Activated CD8-positive, alpha-beta T cell treated with anti-CD3 and anti-CD28 coated beads, Interleukin-2, amount 10 ng/mL, durations not matched to agents 7 days and 5 days (primary cell): ENCODE measurements at regions of chr5 and their contacts with region 1.

Region 1: GRCh38 chr5:81301271-81302015 is at the start of gene ZCCHC9:
- DNase-seq: peak; percentile 96
- ATAC-seq: peak; percentile 97
- H3K4me3 Mint-ChIP-seq: peak within 1 kb of the TSS; percentile 89
- H3K27ac Mint-ChIP-seq: peak within 1 kb of the TSS; percentile 96
- H3K4me1 Mint-ChIP-seq: peaks cover 33% of the 10 kb centered on the region
- H3K27me3 Mint-ChIP-seq: no peaks in the 10 kb centered on the region
- total RNA-seq, gene ZCCHC9: 29.9 to 33.2 TPM

Region 2: DNA sequence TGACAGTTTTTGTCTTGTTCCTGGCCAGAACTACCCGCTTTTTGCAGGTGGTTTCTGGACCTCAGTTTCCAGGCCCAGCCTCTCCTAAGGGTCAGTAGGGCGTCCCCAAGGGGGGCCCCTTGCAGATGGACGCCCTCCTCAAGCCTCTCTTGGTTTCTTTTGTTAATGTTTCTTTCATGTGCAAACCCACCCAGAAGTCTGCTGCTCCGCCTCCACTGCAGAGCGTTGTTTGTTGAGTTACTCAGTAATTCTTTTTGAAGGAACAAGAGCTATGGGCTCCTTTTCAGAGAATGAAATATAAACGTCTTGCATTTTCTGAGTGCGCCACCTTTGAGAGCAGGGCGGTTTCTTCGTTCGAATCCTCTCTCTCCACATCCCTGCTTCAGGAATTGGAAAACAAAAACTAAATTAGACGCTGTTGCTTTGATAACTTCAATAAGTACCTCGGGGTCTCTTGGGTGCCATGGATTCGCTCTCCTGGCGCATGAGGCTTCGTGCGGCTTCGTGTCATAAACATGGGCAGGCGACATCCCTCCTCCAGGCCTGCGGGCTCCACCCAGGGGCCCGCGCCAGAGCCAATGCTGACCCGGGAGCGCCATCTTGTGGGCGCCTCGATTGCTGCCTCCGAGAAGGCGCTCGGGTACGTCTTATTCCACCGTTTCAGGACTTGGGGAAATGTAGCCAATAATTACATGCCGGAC is 106.7 kb before region 1 on chr5:
- CTCF ChIA-PET with region 1: interaction called, 22 read pairs
- POLR2A ChIA-PET with region 1: no interaction called
- DNase-seq: peak; percentile 88
- ATAC-seq: peak; percentile 99
- H3K4me3 Mint-ChIP-seq: peak overlapping the region; percentile 36
- H3K27ac Mint-ChIP-seq: peak overlapping the region; percentile 58
- H3K4me1 Mint-ChIP-seq: peaks cover 9% of the 10 kb centered on the region
- H3K27me3 Mint-ChIP-seq: no peaks in the 10 kb centered on the region

Region 3: GRCh38 chr5:81233080-81233634 is 68.3 kb before region 1 on chr5 and contains the start of gene CKMT2:
- CTCF ChIA-PET with region 1: interaction called, 11 read pairs
- POLR2A ChIA-PET with region 1: no interaction called
- DNase-seq: no peak
- ATAC-seq: no peak
- H3K4me3 Mint-ChIP-seq: no peak within 1 kb of the TSS
- H3K27ac Mint-ChIP-seq: no peak within 1 kb of the TSS
- H3K4me1 Mint-ChIP-seq: peaks cover 35% of the 10 kb centered on the region
- H3K27me3 Mint-ChIP-seq: no peaks in the 10 kb centered on the region
- total RNA-seq, gene CKMT2: not detected

Region 4: GRCh38 chr5:81288021-81288433 is 13.4 kb before region 1 on chr5:
- CTCF ChIA-PET with region 1: interaction called, 22 read pairs
- POLR2A ChIA-PET with region 1: interaction called, 4 read pairs
- DNase-seq: no peak
- ATAC-seq: no peak
- H3K4me3 Mint-ChIP-seq: no peak overlapping the region
- H3K27ac Mint-ChIP-seq: no peak overlapping the region
- H3K4me1 Mint-ChIP-seq: peaks cover 30% of the 10 kb centered on the region
- H3K27me3 Mint-ChIP-seq: no peaks in the 10 kb centered on the region

Region 5: DNA sequence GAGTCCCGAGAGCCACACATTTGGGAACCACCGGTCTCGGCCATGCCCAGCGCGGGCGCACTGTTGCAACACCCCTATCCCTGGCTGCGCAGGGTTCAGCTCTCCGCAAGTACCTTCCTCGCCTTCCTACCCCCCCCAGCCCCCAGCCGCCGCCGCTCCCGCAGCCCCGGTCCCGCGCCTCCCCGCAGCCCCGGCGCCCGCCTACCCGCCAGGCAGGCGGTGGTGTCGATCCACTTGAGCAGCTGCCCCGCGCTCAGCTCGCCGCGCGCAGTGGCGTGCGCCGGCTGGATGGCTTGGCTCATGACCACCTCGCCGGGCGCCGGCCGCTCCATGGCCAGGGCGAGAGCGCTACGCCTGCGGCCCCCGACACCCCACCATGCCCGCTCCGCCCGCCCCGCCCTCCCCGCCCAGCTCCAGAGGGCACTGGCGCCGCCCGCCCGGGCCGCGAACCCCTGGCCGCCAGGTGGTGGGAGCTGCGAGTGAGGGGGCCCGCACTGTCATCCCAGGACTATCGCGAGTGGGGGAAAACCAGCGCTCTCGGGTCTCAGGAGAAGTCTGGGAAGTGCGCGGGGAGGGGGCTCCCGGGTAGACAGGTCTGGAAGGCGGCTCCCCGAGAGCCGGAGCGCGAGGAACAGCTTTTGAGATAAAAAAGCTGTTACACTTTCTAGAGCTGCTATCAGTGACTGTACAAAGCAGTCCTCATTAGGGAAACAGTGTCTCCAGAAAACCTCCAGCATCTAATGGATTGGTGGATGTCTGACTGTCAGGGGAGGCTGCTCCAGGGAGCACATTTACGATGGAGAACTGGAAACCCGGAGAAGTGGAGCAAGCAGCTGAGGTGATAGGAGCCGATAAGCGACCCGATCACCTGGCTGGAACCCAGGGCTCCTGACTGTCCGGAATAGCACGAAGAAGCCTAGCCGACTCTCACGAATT is 92.6 kb after region 1 on chr5 and contains the start of gene ACOT12:
- CTCF ChIA-PET with region 1: no interaction called
- POLR2A ChIA-PET with region 1: no interaction called
- DNase-seq: no peak
- ATAC-seq: peak; percentile 58
- H3K4me3 Mint-ChIP-seq: peak within 1 kb of the TSS; percentile 45
- H3K27ac Mint-ChIP-seq: no peak within 1 kb of the TSS
- H3K4me1 Mint-ChIP-seq: peaks cover 3% of the 10 kb centered on the region
- H3K27me3 Mint-ChIP-seq: peaks cover 54% of the 10 kb centered on the region
- total RNA-seq, gene ACOT12: not detected

Region 6: GRCh38 chr5:81657389-81657788 is 355.9 kb after region 1 on chr5:
- CTCF ChIA-PET with region 1: no interaction called
- POLR2A ChIA-PET with region 1: no interaction called
- DNase-seq: no peak
- ATAC-seq: no peak
- H3K4me3 Mint-ChIP-seq: no peak overlapping the region
- H3K27ac Mint-ChIP-seq: no peak overlapping the region
- H3K4me1 Mint-ChIP-seq: no peaks in the 10 kb centered on the region
- H3K27me3 Mint-ChIP-seq: no peaks in the 10 kb centered on the region